ENCODE measurements at regions of chr19 and their contacts with region 1.

Region 1: GRCh38 chr19:10730923-10731322 is 13.0 kb downstream of the DNM2 start:
- DNase-seq: peak in 1 of 2 donors; percentile 36
- ATAC-seq: peak in 2 of 3 donors; percentile 22 to 27
- H3K4me3 ChIP-seq: no peak overlapping the region
- H3K4me3 Mint-ChIP-seq: peak overlapping the region; percentile 84
- H3K27ac ChIP-seq: peak overlapping the region; percentile 76
- H3K27ac Mint-ChIP-seq: peak overlapping the region; percentile 96 to 99
- H3K4me1 ChIP-seq: peaks cover 58% of the 10 kb centered on the region
- H3K4me1 Mint-ChIP-seq: peaks cover 28 to 32% of the 10 kb centered on the region in 2 donors
- H3K27me3 ChIP-seq: no peaks in the 10 kb centered on the region
- H3K27me3 Mint-ChIP-seq: no peaks in the 10 kb centered on the region
- CTCF ChIP-seq: no peak

Region 2: GRCh38 chr19:10758978-10759377 is 28.1 kb after region 1 on chr19:
- intact Hi-C with region 1: loop called (anchors 2 kb)
- DNase-seq: no peak
- ATAC-seq: no peak
- H3K4me3 ChIP-seq: no peak overlapping the region
- H3K4me3 Mint-ChIP-seq: peak overlapping the region; percentile 91
- H3K27ac ChIP-seq: peak overlapping the region; percentile 75
- H3K27ac Mint-ChIP-seq: peak overlapping the region; percentile 97 to 98
- H3K4me1 ChIP-seq: peaks cover 89% of the 10 kb centered on the region
- H3K4me1 Mint-ChIP-seq: peaks cover 75 to 83% of the 10 kb centered on the region in 2 donors
- H3K27me3 ChIP-seq: no peaks in the 10 kb centered on the region
- H3K27me3 Mint-ChIP-seq: no peaks in the 10 kb centered on the region
- CTCF ChIP-seq: no peak

Region 3: GRCh38 chr19:11064831-11065303 is 333.9 kb after region 1 on chr19:
- intact Hi-C with region 1: no loop called
- DNase-seq: no peak
- ATAC-seq: no peak
- H3K4me3 ChIP-seq: no peak overlapping the region
- H3K4me3 Mint-ChIP-seq: no peak overlapping the region
- H3K27ac ChIP-seq: no peak overlapping the region
- H3K27ac Mint-ChIP-seq: no peak overlapping the region
- H3K4me1 ChIP-seq: no peaks in the 10 kb centered on the region
- H3K4me1 Mint-ChIP-seq: peaks cover 5 to 7% of the 10 kb centered on the region in 2 donors
- H3K27me3 ChIP-seq: no peaks in the 10 kb centered on the region
- H3K27me3 Mint-ChIP-seq: no peaks in the 10 kb centered on the region
- CTCF ChIP-seq: no peak